ENCODE measurements at regions of chr4 and their contacts with region 1.

Region 1: GRCh38 chr4:85798012-85798770 is 323.2 kb downstream of the ARHGAP24 start:
- DNase-seq: no peak
- ATAC-seq: no peak
- H3K4me3 Mint-ChIP-seq: no peak overlapping the region
- H3K27ac Mint-ChIP-seq: no peak overlapping the region
- H3K4me1 Mint-ChIP-seq: peaks cover 3% of the 10 kb centered on the region; the same call in 1 of the 2 replicates
- H3K27me3 Mint-ChIP-seq: no peaks in the 10 kb centered on the region
- CTCF ChIP-seq: no peak

Region 2: GRCh38 chr4:85617202-85617601 is 181.0 kb before region 1 on chr4:
- CTCF ChIA-PET with region 1: no interaction called
- POLR2A ChIA-PET with region 1: no interaction called
- DNase-seq: no peak
- ATAC-seq: no peak
- H3K4me3 Mint-ChIP-seq: no peak overlapping the region
- H3K27ac Mint-ChIP-seq: no peak overlapping the region
- H3K4me1 Mint-ChIP-seq: no peaks in the 10 kb centered on the region
- H3K27me3 Mint-ChIP-seq: no peaks in the 10 kb centered on the region
- CTCF ChIP-seq: no peak

Region 3: GRCh38 chr4:85747882-85748491 is 50.2 kb before region 1 on chr4:
- CTCF ChIA-PET with region 1: interaction called, 12 read pairs
- POLR2A ChIA-PET with region 1: no interaction called
- DNase-seq: peak; percentile 19
- ATAC-seq: peak; percentile 80
- H3K4me3 Mint-ChIP-seq: no peak overlapping the region
- H3K27ac Mint-ChIP-seq: no peak overlapping the region
- H3K4me1 Mint-ChIP-seq: peaks cover 14% of the 10 kb centered on the region
- H3K27me3 Mint-ChIP-seq: no peaks in the 10 kb centered on the region
- CTCF ChIP-seq: peak; percentile 56

Region 4: GRCh38 chr4:85778632-85779131 is 19.5 kb before region 1 on chr4:
- CTCF ChIA-PET with region 1: interaction called, 28 read pairs
- POLR2A ChIA-PET with region 1: no interaction called
- DNase-seq: no peak
- ATAC-seq: no peak
- H3K4me3 Mint-ChIP-seq: peak overlapping the region; percentile 27
- H3K27ac Mint-ChIP-seq: peak overlapping the region; percentile 44; the same call in 1 of the 2 replicates
- H3K4me1 Mint-ChIP-seq: peaks cover 53% of the 10 kb centered on the region
- H3K27me3 Mint-ChIP-seq: no peaks in the 10 kb centered on the region
- CTCF ChIP-seq: no peak

Region 5: DNA sequence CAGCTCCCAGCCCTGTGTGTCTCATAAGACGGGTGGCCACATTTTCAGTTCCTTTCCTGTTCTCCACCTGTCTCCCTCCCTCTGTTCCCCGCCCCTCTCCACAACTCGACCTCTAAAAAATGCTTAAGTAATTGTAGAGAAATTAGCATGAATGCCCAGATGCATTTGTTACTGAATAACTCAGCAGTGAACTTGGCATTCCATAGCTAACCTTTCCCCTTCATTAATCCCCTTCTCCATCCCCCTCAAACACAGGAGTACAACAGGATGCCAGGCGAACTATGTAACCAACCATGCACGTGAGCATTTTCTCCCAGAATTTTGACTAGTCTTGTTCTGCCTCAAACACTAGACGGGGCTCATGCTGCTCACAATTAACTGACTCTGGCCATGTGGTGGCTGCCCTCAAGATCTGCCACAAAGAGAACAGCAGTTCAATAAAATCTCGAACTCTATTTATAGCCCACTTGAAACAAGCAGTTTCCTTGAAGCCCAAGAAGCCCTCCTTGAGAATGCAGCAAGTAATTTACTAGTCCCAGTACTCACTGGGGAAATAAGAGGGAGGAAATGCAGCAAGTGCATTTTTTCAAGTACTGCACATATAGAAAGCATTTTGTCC is 28.0 kb after region 1 on chr4:
- CTCF ChIA-PET with region 1: interaction called, 23 read pairs
- POLR2A ChIA-PET with region 1: no interaction called
- DNase-seq: peak; percentile 34
- ATAC-seq: peak; percentile 89
- H3K4me3 Mint-ChIP-seq: peak overlapping the region; percentile 28
- H3K27ac Mint-ChIP-seq: peak overlapping the region; percentile 63
- H3K4me1 Mint-ChIP-seq: peaks cover 64% of the 10 kb centered on the region
- H3K27me3 Mint-ChIP-seq: no peaks in the 10 kb centered on the region
- CTCF ChIP-seq: no peak

Region 6: GRCh38 chr4:85909851-85910250 is 111.7 kb after region 1 on chr4:
- CTCF ChIA-PET with region 1: interaction called, 18 read pairs
- POLR2A ChIA-PET with region 1: no interaction called
- DNase-seq: no peak
- ATAC-seq: 0 out of 2 replicates have a peak, but pooled peaks have one; percentile 32
- H3K4me3 Mint-ChIP-seq: no peak overlapping the region
- H3K27ac Mint-ChIP-seq: 0 out of 2 replicates have a peak overlapping the region, but pooled peaks have one; percentile 57
- H3K4me1 Mint-ChIP-seq: no peaks in the 10 kb centered on the region
- H3K27me3 Mint-ChIP-seq: no peaks in the 10 kb centered on the region
- CTCF ChIP-seq: no peak

Region 7: DNA sequence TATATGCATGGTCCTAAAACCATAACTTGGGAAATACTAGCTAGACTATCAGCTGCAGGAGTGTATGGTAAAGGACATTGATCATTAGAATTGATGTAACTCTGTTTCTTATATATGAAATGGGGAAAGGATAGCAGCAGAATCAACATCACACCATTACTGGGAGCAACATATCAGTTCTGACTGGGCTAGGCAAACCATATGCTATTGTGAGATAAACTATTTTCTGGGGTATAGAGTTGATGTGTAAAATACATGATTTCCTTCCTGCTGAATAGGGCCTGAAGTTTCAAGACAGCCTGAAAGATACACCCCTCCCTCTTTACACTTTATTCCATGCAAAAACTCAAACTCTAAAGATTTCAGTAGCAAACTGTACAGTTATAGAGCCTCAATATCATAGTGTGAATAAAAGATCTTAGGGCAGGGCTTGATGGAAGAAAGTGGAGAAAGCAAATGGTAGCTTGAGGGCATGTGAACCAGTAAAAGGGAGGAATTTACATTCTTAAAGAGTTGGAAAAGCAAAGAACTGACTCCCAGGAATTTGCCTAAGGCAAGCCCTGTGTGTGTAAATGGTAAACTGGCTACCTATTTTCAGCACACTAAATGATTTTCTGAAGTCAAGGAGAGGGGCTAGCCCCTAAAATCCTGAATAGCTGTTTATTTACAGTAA is 157.6 kb after region 1 on chr4:
- CTCF ChIA-PET with region 1: interaction called, 54 read pairs
- POLR2A ChIA-PET with region 1: no interaction called
- DNase-seq: no peak
- ATAC-seq: peak; percentile 73
- H3K4me3 Mint-ChIP-seq: no peak overlapping the region
- H3K27ac Mint-ChIP-seq: peak overlapping the region; percentile 42
- H3K4me1 Mint-ChIP-seq: peaks cover 42% of the 10 kb centered on the region
- H3K27me3 Mint-ChIP-seq: no peaks in the 10 kb centered on the region
- CTCF ChIP-seq: no peak

Region 8: GRCh38 chr4:86032476-86033022 is 234.4 kb after region 1 on chr4:
- CTCF ChIA-PET with region 1: interaction called, 16 read pairs
- POLR2A ChIA-PET with region 1: no interaction called
- DNase-seq: no peak
- ATAC-seq: 0 out of 2 replicates have a peak, but pooled peaks have one; percentile 57
- H3K4me3 Mint-ChIP-seq: no peak overlapping the region
- H3K27ac Mint-ChIP-seq: no peak overlapping the region
- H3K4me1 Mint-ChIP-seq: peaks cover 15% of the 10 kb centered on the region
- H3K27me3 Mint-ChIP-seq: no peaks in the 10 kb centered on the region
- CTCF ChIP-seq: no peak

Measured in WTC11 (cell line).